ENCODE measurements at regions of chr4 and their contacts with region 1.

Region 1: DNA sequence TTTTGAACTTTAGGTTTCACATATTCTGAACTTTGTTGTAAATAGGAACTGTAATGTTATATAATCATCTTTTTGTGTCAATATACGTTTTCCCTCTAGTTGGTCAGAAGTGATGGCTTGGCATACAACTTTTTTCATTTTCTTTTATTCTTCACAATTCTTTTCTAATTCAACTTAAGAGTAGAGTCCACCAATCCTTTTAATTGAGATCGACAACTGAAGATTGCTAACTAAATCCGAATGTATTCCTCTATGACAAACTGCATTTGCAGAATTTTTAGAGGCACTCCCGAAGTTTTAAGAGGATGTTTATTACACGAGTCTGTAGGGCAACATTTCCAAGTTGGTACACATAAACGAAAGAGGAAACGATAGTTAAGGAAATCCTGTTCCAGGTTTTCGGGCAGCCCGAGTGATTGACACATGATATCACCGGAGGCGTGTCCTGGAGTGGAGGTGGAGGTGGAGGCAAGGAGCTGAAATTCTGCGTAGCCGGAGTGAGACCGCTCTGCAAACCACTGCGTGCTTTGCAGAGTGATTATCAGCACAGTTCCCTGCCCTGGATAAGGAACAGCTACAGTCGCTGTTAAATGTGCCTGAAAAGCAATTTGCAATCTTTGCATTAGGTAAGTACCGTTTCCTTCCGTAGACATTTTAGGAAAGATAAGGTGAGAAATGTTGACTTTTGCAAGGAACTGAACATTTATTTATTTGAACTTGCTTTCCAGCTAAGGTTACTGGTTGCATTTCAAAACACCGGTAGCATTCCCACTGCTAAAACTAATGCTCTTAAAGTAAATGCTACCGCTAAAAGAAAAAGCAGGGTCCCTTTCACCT is at the start of gene SPRY1:
- DNase-seq: peak; percentile 79
- H3K4me3 Mint-ChIP-seq: peak within 1 kb of the TSS; percentile 92
- H3K27ac Mint-ChIP-seq: peak within 1 kb of the TSS; percentile 91
- H3K4me1 Mint-ChIP-seq: peaks cover 25% of the 10 kb centered on the region
- H3K27me3 Mint-ChIP-seq: peaks cover 9% of the 10 kb centered on the region
- total RNA-seq, gene SPRY1: 59.1 and 61.8 TPM in 2 replicates

Region 2: DNA sequence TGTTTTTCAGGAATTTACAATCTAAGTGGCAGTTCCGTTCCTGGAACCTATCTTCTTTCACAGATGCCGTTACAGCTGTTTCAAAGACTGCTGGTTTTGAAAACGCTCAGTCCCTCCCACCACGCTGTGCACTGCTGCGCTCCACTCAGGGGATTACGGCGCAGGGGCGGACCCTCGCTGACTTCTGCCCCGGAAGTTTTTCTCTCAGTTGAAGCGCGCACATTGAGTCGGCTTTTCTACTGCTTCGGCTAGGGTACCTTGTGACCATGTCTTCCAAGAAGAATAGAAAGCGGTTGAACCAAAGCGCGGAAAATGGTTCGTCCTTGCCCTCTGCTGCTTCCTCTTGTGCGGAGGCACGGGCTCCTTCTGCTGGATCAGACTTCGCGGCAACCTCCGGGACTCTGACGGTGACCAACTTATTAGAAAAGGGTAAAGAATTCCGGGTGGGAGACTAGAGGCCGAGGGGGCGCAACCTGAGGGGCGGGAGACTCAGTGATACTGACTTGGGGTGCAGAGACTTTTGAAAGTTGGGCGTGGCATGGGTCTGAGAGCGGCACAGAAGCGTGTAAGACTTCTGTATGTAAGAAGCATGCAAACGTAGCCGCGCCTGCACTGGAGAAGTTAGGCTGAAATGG is 473.5 kb before region 1 on chr4:
- intact Hi-C with region 1: loop called (anchors 5 kb)
- DNase-seq: peak; percentile 88
- H3K4me3 Mint-ChIP-seq: peak overlapping the region; percentile 95
- H3K27ac Mint-ChIP-seq: peak overlapping the region; percentile 97
- H3K4me1 Mint-ChIP-seq: peaks cover 15% of the 10 kb centered on the region
- H3K27me3 Mint-ChIP-seq: no peaks in the 10 kb centered on the region

Region 3: GRCh38 chr4:123381996-123382395 is 14.5 kb before region 1 on chr4:
- intact Hi-C with region 1: no loop called
- DNase-seq: no peak
- H3K4me3 Mint-ChIP-seq: no peak overlapping the region
- H3K27ac Mint-ChIP-seq: no peak overlapping the region
- H3K4me1 Mint-ChIP-seq: peaks cover 2% of the 10 kb centered on the region
- H3K27me3 Mint-ChIP-seq: peaks cover 21% of the 10 kb centered on the region

Region 4: DNA sequence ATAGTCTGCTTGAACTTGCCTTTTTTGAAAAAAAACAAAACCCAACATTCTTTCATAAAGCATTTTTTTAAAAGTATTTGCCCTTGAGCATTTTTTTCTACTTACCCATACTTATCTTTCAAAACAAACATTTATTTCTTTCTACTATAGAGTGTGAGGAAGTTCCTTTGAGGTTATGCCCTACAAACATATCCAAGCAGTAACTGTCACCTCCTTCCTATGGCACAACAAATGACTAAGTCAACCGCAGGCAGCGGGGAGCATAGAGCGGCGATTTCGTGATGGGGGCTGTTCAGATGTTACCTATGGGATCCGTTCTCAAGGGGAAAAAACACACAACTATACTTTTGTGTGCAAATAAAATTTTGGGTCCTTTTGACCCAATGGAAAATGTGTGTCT is 19.5 kb after region 1 on chr4:
- intact Hi-C with region 1: loop called (anchors 1 kb)
- DNase-seq: peak; percentile 50
- H3K4me3 Mint-ChIP-seq: peak overlapping the region; percentile 14
- H3K27ac Mint-ChIP-seq: peak overlapping the region; percentile 85
- H3K4me1 Mint-ChIP-seq: peaks cover 70% of the 10 kb centered on the region
- H3K27me3 Mint-ChIP-seq: no peaks in the 10 kb centered on the region

Region 5: GRCh38 chr4:123430031-123430430 is 33.5 kb after region 1 on chr4:
- intact Hi-C with region 1: no loop called
- DNase-seq: no peak
- H3K4me3 Mint-ChIP-seq: no peak overlapping the region
- H3K27ac Mint-ChIP-seq: no peak overlapping the region
- H3K4me1 Mint-ChIP-seq: peaks cover 15% of the 10 kb centered on the region
- H3K27me3 Mint-ChIP-seq: no peaks in the 10 kb centered on the region

Region 6: GRCh38 chr4:123444290-123444731 is 47.8 kb after region 1 on chr4:
- intact Hi-C with region 1: loop called (anchors 1 kb)
- DNase-seq: peak; percentile 28
- H3K4me3 Mint-ChIP-seq: peak overlapping the region; percentile 35
- H3K27ac Mint-ChIP-seq: peak overlapping the region; percentile 78
- H3K4me1 Mint-ChIP-seq: peaks cover 30% of the 10 kb centered on the region
- H3K27me3 Mint-ChIP-seq: no peaks in the 10 kb centered on the region

Region 7: DNA sequence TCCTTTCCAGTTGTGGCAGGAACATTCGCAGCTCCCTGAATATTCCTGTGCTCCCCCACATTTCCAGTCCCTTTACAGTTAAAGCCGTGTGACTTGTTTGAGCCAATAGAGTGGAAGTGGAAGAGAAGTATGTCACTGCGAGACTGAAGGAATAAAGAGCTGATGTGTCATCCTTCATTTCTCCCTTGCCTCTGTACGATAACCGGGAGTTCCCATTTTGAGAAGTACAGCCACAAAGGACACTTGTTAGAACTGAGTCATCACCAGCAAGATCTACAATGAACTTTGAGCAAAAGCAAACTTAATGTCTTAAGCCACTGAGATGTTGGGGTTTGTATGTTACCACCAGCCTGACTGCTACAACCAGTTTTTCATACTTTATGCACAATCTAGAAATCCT is 92.4 kb after region 1 on chr4:
- intact Hi-C with region 1: loop called (anchors 1 kb)
- DNase-seq: no peak
- H3K4me3 Mint-ChIP-seq: no peak overlapping the region
- H3K27ac Mint-ChIP-seq: peak overlapping the region; percentile 56
- H3K4me1 Mint-ChIP-seq: peaks cover 10% of the 10 kb centered on the region
- H3K27me3 Mint-ChIP-seq: peaks cover 2% of the 10 kb centered on the region

Region 8: GRCh38 chr4:123564758-123565346 is 168.3 kb after region 1 on chr4:
- intact Hi-C with region 1: loop called (anchors 2 kb)
- DNase-seq: peak; percentile 36
- H3K4me3 Mint-ChIP-seq: no peak overlapping the region
- H3K27ac Mint-ChIP-seq: no peak overlapping the region
- H3K4me1 Mint-ChIP-seq: peaks cover 9% of the 10 kb centered on the region
- H3K27me3 Mint-ChIP-seq: peaks cover 26% of the 10 kb centered on the region